Left cardiac atrium (tissue), 4 donors: ENCODE measurements at regions of chr4 and their contacts with region 1.

Region 1: GRCh38 chr4:113106108-113106507 is 56.7 kb downstream of the ANK2 start:
- DNase-seq: no peak
- ATAC-seq: peak; percentile 47 to 61

Region 2: DNA sequence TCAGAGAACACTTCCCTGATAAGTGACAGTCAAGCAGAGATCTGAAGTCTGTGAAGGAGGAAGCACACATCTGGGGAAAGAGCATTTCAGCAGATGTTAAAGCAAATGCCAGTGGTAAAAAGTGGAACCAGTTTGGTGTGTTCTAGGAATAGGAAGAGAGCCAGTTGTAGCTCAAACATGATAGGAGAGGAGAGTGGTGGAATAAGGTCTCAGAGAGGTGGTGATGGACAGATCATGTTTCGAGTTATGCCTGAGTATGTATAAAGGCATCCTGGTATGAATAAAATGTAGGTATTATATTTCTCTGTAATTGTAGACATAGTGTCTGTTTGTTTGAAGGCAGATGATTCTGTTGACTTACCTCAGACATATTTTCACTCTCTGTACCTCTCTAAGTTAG is 380.1 kb before region 1 on chr4:
- intact Hi-C with region 1: no loop called
- DNase-seq: no peak
- ATAC-seq: no peak

Region 3: DNA sequence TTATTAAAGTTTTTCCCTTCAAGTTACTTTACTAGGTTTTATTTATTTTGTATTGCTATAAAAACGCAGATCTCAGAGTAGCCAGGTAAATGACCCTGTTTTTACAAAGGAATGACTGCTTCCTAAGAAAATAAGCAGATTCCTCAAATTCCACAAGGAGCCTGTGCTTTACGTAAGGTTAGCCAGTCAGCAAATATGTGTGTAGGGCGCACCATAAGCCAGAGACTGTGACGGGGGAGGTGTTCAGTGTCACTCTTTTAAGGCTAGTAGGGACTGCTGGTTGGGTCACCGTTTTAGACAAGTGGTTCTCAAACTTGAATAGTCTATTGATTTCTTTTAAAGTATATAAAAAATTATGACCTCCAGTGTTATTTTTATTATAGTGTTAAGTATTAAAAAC is 63.3 kb after region 1 on chr4:
- intact Hi-C with region 1: no loop called
- DNase-seq: no peak
- ATAC-seq: peak in 1 of 2 donors; percentile 51

Region 4: DNA sequence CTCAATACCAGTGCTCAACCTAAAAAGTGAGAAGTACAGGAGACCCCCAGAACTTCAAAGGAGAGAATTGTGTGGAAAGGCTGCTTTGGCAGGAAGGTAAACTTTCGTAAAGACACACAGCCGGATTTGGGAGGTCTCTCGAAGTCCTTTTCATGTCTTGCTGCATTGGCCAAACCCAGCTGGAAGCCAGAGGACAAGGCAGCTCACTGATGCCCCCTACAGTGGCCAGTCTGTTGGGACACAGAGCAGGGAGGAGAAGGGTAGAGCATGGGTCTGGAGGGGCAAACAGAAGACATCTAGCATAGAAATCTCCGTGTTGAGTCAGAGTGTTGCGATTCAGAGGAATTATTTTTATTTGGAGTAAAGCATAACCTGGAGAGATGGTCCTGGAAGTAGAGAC is 142.2 kb after region 1 on chr4:
- intact Hi-C with region 1: loop called in 1 of 2 experiments (anchors 10 kb)
- DNase-seq: no peak
- ATAC-seq: no peak